Calu3 (cell line): ENCODE measurements at regions of chr3 and their contacts with region 1.

Region 1: GRCh38 chr3:184417619-184418327 is 37.9 kb downstream of the CHRD start:
- DNase-seq: peak; percentile 87
- H3K4me3 Mint-ChIP-seq: no peak overlapping the region
- H3K27ac Mint-ChIP-seq: no peak overlapping the region
- H3K4me1 Mint-ChIP-seq: no peaks in the 10 kb centered on the region
- H3K27me3 Mint-ChIP-seq: peaks cover 6% of the 10 kb centered on the region
- CTCF ChIP-seq: peak; percentile 100

Region 2: DNA sequence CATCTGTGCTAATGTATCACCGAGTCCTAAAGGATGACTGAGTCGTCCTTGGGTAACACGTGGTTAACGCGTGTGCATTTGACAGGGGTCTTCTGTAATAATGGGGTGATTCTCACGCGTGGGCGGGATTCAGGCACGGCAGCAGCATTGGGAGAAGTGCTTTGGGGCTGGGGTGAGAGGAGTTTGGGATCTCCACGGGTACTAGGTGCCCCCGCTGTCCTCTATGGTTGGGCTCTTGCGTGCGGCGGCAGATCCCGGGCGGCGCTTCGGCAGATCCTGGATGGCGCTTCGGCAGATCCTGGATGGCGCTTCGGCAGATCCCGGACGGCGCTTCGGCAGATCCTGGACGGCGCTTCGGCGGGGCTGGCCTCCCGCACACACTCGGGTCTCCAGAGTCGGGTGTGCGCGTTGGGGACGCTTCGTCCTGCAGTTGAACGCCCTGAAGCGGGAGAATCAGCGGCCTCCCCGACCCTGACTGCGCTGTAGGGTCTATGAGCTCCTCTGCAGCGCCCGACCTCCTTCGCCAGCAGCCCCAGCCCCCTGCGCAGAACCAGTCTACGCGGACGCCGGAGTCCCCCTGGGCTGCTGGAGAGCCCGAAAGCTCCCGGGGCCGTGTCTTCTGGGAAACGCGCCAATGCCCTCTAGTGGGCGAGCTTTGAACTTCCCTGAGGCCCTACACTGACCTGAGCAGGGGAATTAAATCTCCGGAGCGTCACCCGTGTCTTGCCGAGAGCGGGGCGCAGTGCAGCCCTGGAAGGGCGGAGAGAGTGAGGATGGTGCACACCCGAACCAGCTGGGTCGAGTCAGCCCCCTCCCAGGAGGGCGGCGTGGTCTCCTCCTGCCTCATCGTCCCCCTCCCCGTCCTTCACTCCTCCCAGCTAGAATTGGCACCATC is 95.8 kb after region 1 on chr3:
- CTCF ChIA-PET with region 1: interaction called, 20 read pairs
- intact Hi-C with region 1: loop called (anchors 1 kb)
- DNase-seq: peak; percentile 94
- H3K4me3 Mint-ChIP-seq: peak overlapping the region; percentile 58
- H3K27ac Mint-ChIP-seq: no peak overlapping the region
- H3K4me1 Mint-ChIP-seq: no peaks in the 10 kb centered on the region
- H3K27me3 Mint-ChIP-seq: peaks cover 100% of the 10 kb centered on the region
- CTCF ChIP-seq: peak; percentile 99

Region 3: GRCh38 chr3:184543843-184544512 is 126.2 kb after region 1 on chr3:
- CTCF ChIA-PET with region 1: interaction called, 4 read pairs
- intact Hi-C with region 1: loop called (anchors 1 kb)
- DNase-seq: peak; percentile 92
- H3K4me3 Mint-ChIP-seq: no peak overlapping the region
- H3K27ac Mint-ChIP-seq: no peak overlapping the region
- H3K4me1 Mint-ChIP-seq: no peaks in the 10 kb centered on the region
- H3K27me3 Mint-ChIP-seq: peaks cover 92% of the 10 kb centered on the region
- CTCF ChIP-seq: peak; percentile 95